Common myeloid progenitor, CD34-positive (primary cell): ENCODE measurements at regions of chr11 and their contacts with region 1.

Region 1: DNA sequence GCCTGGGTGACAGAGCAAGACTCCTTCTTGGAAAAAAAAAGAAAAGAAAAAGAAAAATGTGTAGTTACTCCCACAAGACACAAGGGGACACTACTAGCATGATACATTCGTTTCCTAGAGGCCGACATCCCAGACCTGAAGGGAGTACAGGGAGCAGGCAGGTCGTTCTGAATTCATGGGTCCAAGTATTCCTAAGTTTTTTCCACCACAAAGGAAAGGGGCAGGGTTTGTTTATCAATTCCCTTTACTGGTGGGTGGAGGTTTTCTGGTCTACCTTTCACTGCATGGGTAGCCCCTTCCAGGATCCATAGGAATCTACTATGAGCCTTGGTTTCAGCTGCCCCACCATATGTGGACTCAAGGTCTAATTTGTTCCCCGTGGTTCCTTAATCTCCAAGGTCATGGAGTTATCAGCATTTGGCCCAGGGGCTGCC is 11.8 kb downstream of the TIGD3 start:
- DNase-seq: peak; percentile 73 to 79 (median 77)
- H3K4me3 ChIP-seq: peak overlapping the region in 1 of 7 experiments; percentile 38
- H3K27ac ChIP-seq: peak overlapping the region in 1 of 2 experiments; percentile 49
- H3K4me1 ChIP-seq: peaks cover 8 to 33% (median 31%) of the 10 kb centered on the region in 4 experiments
- H3K27me3 ChIP-seq: no peaks in the 10 kb centered on the region

Region 2: GRCh38 chr11:65382033-65382807 is 15.9 kb after region 1 on chr11 and contains the start of gene SLC25A45:
- CTCF ChIA-PET with region 1: interaction called, 22 read pairs
- POLR2A ChIA-PET with region 1: interaction called, 4 read pairs
- DNase-seq: peak; percentile 95 to 98 (median 97)
- H3K4me3 ChIP-seq: peak within 1 kb of the TSS; percentile 39 to 80 (median 62)
- H3K27ac ChIP-seq: peak within 1 kb of the TSS; percentile 88 to 93
- H3K4me1 ChIP-seq: peaks cover 2 to 96% (median 87%) of the 10 kb centered on the region in 4 experiments
- H3K27me3 ChIP-seq: no peaks in the 10 kb centered on the region

Region 3: GRCh38 chr11:65393513-65394090 is 27.2 kb after region 1 on chr11:
- CTCF ChIA-PET with region 1: no interaction called
- POLR2A ChIA-PET with region 1: no interaction called
- DNase-seq: no peak
- H3K4me3 ChIP-seq: no peak overlapping the region
- H3K27ac ChIP-seq: no peak overlapping the region
- H3K4me1 ChIP-seq: peaks cover 0 to 19% (median 17%) of the 10 kb centered on the region in 4 experiments
- H3K27me3 ChIP-seq: no peaks in the 10 kb centered on the region

Region 4: GRCh38 chr11:65524741-65525545 is 158.6 kb after region 1 on chr11 and contains the start of gene SCYL1:
- CTCF ChIA-PET with region 1: no interaction called
- POLR2A ChIA-PET with region 1: no interaction called
- DNase-seq: peak in 2 of 3 donors; percentile 75 to 77
- H3K4me3 ChIP-seq: peak within 1 kb of the TSS; percentile 67 to 85 (median 77)
- H3K27ac ChIP-seq: peak within 1 kb of the TSS in 1 of 2 experiments; percentile 79
- H3K4me1 ChIP-seq: peaks cover 10 to 44% (median 38%) of the 10 kb centered on the region in 4 experiments
- H3K27me3 ChIP-seq: no peaks in the 10 kb centered on the region